AG04450 (cell line): ENCODE measurements at regions of chr15 and their contacts with region 1.

Region 1: DNA sequence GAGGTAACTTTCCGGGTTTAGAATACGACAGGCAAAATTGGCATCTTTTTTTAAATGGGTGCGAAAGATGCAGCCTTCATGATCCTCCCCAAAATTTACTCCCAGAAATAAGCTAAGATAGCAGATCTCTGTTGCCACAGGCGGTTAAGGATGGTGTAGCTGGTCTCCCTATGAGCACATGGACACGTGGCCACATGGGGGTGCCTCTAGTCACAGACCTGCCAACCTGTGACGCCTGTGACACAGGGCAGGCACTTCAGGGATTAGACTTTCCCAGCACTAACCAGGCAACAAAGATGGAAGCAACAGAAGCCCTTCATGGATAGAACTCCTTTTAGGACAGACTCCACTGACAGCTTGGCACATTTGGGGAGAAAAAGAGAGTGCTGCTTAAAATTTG is 320.3 kb downstream of the THSD4 start:
- DNase-seq: no peak
- H3K4me3 ChIP-seq: no peak overlapping the region
- H3K27ac ChIP-seq: no peak overlapping the region
- H3K27me3 ChIP-seq: no peaks in the 10 kb centered on the region
- CTCF ChIP-seq: no peak

Region 2: GRCh38 chr15:71386448-71387236 is 48.9 kb before region 1 on chr15:
- CTCF ChIA-PET with region 1: interaction called, 20 read pairs
- POLR2A ChIA-PET with region 1: no interaction called
- DNase-seq: no peak
- H3K4me3 ChIP-seq: no peak overlapping the region
- H3K27ac ChIP-seq: no peak overlapping the region
- H3K27me3 ChIP-seq: no peaks in the 10 kb centered on the region
- CTCF ChIP-seq: peak; percentile 43

Region 3: DNA sequence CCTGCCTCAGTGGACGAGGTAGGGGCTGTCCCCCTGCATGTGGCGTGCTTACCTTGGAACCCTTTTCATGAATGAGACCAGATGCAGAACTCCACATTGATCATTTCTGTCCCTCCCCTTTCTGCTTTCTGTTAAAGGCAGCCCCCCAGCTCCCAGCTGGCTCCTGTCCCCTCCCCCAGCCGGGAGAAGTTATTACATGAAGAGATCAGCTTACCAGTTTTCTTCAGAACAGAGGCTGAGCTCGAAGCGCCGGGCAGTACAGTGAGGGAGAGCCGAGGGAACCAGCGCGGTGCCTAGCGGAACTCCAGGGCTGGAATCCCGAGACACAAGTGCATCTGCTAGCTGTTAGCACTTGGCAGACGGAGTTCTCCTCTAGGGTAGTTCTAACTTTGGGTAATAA is 111.5 kb after region 1 on chr15:
- CTCF ChIA-PET with region 1: no interaction called
- POLR2A ChIA-PET with region 1: no interaction called
- DNase-seq: no peak
- H3K4me3 ChIP-seq: no peak overlapping the region
- H3K27ac ChIP-seq: no peak overlapping the region
- H3K27me3 ChIP-seq: no peaks in the 10 kb centered on the region
- CTCF ChIP-seq: no peak